Breast epithelium (tissue), 4 donors: ENCODE measurements at regions of chr14 and their contacts with region 1.

Region 1: GRCh38 chr14:53668897-53669296 is 287.7 kb downstream of the BMP4 start:
- DNase-seq: no peak
- H3K4me3 ChIP-seq: no peak overlapping the region
- H3K27ac ChIP-seq: no peak overlapping the region
- H3K4me1 ChIP-seq: no peaks in the 10 kb centered on the region
- H3K27me3 ChIP-seq: no peaks in the 10 kb centered on the region
- CTCF ChIP-seq: no peak
- POLR2A ChIP-seq: no peak

Region 2: DNA sequence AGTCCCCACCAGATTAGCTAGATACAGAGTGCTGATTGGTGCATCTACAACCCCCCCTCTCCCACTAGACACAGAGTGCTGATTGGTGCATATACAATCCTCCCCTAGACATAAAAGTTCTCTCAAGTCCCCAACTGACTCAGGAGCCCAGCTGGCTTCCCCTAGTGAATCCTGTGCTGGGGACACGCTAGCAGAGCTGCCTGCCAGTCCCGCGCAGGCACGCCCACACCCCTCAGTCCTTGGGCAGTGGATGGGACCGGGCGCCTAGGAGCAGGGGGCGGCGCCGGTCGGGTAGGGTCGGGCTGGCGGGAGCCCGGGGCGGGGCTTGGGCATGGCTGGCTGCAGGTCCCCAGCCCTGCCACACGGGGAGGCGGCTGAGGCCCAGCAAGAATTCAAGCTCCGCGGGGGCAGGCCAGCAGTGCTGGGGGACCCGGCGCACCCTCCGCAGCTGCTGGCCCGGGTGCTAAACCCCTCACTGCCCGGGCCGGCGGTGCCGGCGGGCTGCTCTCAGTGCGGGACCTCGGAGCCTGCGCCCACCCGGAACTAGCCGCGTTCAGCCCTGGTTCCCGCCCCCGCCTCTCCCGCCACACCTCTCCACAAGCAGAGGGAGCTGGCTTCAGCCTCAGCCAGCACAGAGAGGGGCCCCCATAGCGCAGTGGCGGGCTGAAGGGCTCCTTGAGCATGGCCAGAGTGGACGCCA is 451.5 kb before region 1 on chr14:
- intact Hi-C with region 1: loop called (anchors 5 kb)
- DNase-seq: peak; percentile 26 to 71
- H3K4me3 ChIP-seq: peak overlapping the region; percentile 53 to 71 (median 66)
- H3K27ac ChIP-seq: peak overlapping the region; percentile 48 to 67
- H3K4me1 ChIP-seq: no peaks in the 10 kb centered on the region
- H3K27me3 ChIP-seq: no peaks in the 10 kb centered on the region
- CTCF ChIP-seq: peak; percentile 63 to 77 (median 64)
- POLR2A ChIP-seq: no peak

Region 3: GRCh38 chr14:54606178-54606577 is 937.3 kb after region 1 on chr14:
- intact Hi-C with region 1: no loop called
- DNase-seq: no peak
- H3K4me3 ChIP-seq: no peak overlapping the region
- H3K27ac ChIP-seq: no peak overlapping the region
- H3K4me1 ChIP-seq: no peaks in the 10 kb centered on the region
- H3K27me3 ChIP-seq: no peaks in the 10 kb centered on the region
- CTCF ChIP-seq: no peak
- POLR2A ChIP-seq: no peak